Activated naive CD4-positive, alpha-beta T cell treated with anti-CD3 and anti-CD28 coated beads for 36 hours (primary cell): ENCODE measurements at regions of chr14 and their contacts with region 1.

Region 1: DNA sequence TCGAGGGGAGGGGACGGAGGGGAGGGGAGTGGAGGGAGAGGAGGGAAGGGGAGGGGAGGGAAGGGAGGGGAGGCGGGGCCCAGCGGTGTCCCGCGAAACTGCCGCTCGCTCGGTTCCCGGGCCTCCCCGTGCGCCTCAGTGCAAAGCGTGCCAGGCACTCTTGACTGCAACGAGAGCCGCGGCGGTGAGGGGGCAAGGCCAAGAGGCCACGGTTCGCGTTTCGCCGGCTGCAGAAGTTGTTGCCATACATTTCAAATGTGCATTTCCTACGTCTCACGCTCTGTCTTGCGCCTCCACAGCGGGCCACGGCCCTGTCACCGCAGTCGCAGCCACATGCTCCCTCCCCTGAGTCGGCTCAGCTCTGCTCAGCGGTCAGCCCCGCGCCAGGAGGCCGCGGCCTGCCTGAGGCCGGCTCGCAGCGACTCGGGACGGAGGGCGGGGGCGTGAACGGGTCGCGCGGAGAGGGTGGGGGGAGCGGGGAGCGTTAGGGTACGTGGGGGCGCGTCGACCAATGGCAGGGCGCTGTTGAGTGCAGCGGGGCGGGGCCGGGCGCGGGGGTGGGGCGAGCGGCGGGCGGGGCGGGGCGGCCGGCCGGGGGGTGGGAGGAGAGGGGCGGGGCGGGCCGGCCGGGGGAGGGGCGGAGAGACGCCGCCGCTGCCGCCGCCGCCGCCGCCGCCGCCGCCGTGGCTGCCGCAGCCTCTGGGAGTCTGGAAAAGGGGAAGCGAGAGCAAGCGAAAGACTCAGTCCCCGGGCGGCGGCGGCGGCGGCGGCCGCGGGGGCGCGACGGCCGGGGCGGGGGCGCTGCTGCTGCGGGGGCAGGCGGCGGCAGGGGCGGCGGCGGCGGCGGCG is at the start of gene PPP2R5C:
- DNase-seq: peak; percentile 85
- H3K4me3 Mint-ChIP-seq: peak within 1 kb of the TSS; percentile 91
- H3K27ac Mint-ChIP-seq: peak within 1 kb of the TSS; percentile 79
- H3K4me1 Mint-ChIP-seq: peaks cover 42% of the 10 kb centered on the region
- H3K27me3 Mint-ChIP-seq: no peaks in the 10 kb centered on the region
- total RNA-seq, gene PPP2R5C: 280 to 294 TPM

Region 2: GRCh38 chr14:101584055-101584859 is 177.0 kb before region 1 on chr14:
- CTCF ChIA-PET with region 1: no interaction called
- intact Hi-C with region 1: no loop called
- DNase-seq: no peak
- H3K4me3 Mint-ChIP-seq: no peak overlapping the region
- H3K27ac Mint-ChIP-seq: no peak overlapping the region
- H3K4me1 Mint-ChIP-seq: no peaks in the 10 kb centered on the region
- H3K27me3 Mint-ChIP-seq: no peaks in the 10 kb centered on the region

Region 3: DNA sequence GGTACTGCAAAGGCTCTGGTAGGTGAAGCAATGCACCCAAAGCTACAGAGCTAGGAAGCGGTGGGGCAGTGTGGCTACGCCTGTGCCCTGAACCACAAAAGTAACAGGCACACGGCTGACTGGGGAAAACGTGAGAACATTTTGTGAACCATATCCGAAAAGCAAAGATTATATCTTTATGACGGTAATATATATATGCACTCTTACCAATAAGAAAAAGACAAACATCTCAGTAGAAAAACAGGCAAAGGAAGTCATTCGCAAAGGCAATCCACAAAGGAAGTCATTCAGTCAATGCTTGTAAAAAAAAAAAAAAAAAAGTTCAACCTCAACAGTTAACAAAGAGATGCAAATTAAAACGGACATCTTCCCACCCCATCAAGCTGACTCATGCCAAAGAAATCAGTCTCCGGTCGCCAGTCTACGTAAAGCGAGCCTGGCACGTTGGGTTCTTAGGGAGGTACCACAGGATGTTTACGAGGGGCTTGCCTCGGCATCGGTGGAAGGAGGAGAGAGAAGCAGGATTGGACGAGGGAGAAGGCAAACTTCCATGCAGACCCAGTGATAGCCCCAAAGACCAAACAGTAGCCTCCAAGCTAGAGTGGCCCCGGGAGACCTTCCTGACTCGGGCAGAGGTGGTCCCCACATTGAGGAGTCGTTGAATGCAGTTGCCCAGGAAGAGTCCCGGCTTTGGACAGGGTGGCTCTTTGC is 39.1 kb before region 1 on chr14:
- CTCF ChIA-PET with region 1: interaction called, 3 read pairs
- intact Hi-C with region 1: loop called (anchors 1 kb)
- DNase-seq: peak; percentile 88
- H3K4me3 Mint-ChIP-seq: peak overlapping the region; percentile 73
- H3K27ac Mint-ChIP-seq: peak overlapping the region; percentile 94
- H3K4me1 Mint-ChIP-seq: peaks cover 35% of the 10 kb centered on the region
- H3K27me3 Mint-ChIP-seq: no peaks in the 10 kb centered on the region

Region 4: DNA sequence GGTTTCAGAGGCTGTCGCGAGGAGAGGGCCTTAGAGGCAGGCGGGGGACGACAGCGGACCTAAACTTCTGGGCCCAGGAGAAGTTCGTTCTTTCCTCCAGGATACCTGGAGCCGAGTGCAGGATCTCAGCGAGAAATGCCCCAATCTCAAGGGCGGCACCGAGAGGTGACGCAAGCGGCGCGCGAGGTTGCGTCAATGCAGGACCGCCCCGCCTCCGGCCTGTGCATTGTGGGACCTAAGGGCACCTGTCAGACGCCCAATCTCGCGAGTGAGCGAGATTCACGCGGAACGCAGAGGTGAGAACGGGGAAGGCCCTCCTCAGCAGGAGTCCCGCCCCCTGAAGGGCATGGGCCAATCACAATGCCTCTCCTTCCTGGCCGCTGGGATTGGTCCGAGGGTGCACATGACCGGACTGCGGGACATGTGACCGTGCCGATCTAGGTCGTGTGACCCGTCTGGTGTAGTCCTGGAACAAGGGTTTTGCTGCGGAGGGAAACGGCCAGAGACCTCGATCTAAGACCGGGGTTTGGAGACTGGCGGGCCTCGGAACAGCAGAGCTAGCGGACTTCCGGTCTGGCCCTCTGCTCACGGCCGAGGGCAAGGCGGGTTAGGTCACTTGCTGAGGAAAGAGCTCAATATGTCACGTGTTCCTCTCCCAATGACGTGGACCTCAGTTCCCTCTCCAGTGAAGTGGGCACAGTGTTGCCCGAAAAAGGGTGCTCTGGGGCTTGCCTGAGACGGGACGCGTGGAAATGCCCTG is 186.8 kb after region 1 on chr14:
- CTCF ChIA-PET with region 1: no interaction called
- intact Hi-C with region 1: loop called (anchors 1 kb)
- DNase-seq: peak; percentile 100
- H3K4me3 Mint-ChIP-seq: peak overlapping the region; percentile 98
- H3K27ac Mint-ChIP-seq: peak overlapping the region; percentile 97
- H3K4me1 Mint-ChIP-seq: peaks cover 18% of the 10 kb centered on the region
- H3K27me3 Mint-ChIP-seq: peaks cover 20% of the 10 kb centered on the region